IMR-90 (cell line): ENCODE measurements at regions of chr3 and their contacts with region 1.

Region 1: GRCh38 chr3:87997298-87997697 is 61.5 kb downstream of the CGGBP1 start:
- DNase-seq: no peak
- ATAC-seq: no peak
- H3K4me3 ChIP-seq: no peak overlapping the region
- H3K27ac ChIP-seq: no peak overlapping the region
- H3K4me1 ChIP-seq: no peaks in the 10 kb centered on the region
- H3K27me3 ChIP-seq: peaks cover 5% of the 10 kb centered on the region
- CTCF ChIP-seq: no peak
- POLR2A ChIP-seq: no peak
- RAD21 ChIP-seq: no peak

Region 2: DNA sequence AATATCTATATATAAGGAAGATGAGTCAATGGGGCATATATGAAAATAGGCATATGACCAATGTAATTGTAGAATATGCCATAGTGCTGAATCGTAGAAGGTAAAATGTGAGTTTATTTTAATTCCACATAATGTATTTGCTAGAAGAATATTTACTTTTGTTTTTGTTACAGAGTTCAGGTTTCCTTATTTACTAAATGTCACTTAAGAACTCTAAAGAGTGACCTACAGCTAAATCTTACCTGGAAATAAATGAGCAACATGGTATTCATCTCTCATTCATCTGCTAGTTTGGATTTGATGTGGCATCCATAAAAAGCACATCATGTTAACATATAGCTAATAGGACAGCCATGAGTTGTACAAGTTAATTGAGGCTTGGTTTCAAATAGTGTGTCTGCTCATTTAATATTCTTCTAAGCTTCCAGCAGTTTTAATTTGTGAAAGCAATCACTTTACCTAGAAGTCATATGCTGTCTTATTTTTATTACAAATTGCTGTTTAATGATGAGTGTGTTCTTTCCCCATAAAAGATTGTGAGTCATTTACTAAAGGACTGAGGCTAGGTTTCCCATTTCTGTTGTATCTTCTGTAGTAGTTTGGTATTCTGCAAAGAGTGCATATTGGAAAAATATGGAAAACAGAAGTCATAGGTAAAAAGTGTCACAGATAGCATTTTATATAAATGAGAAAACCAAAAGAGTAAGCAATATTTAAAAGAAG is 498.8 kb before region 1 on chr3:
- CTCF ChIA-PET with region 1: no interaction called
- POLR2A ChIA-PET with region 1: no interaction called
- dilution Hi-C with region 1: no loop called
- in situ Hi-C with region 1: no loop called
- intact Hi-C with region 1: loop called (anchors 10 kb)
- DNase-seq: no peak
- ATAC-seq: no peak
- H3K4me3 ChIP-seq: no peak overlapping the region
- H3K27ac ChIP-seq: no peak overlapping the region
- H3K4me1 ChIP-seq: no peaks in the 10 kb centered on the region
- H3K27me3 ChIP-seq: no peaks in the 10 kb centered on the region
- CTCF ChIP-seq: no peak
- POLR2A ChIP-seq: no peak
- RAD21 ChIP-seq: no peak

Region 3: GRCh38 chr3:87924485-87924884 is 72.8 kb before region 1 on chr3:
- CTCF ChIA-PET with region 1: no interaction called
- POLR2A ChIA-PET with region 1: no interaction called
- dilution Hi-C with region 1: no loop called
- in situ Hi-C with region 1: no loop called
- intact Hi-C with region 1: no loop called
- DNase-seq: no peak
- ATAC-seq: no peak
- H3K4me3 ChIP-seq: no peak overlapping the region
- H3K27ac ChIP-seq: no peak overlapping the region
- H3K4me1 ChIP-seq: no peaks in the 10 kb centered on the region
- H3K27me3 ChIP-seq: no peaks in the 10 kb centered on the region
- CTCF ChIP-seq: no peak
- POLR2A ChIP-seq: no peak
- RAD21 ChIP-seq: no peak